Activated CD4-positive, alpha-beta memory T cell treated with anti-CD3 and anti-CD28 coated beads for 36 hours (primary cell): ENCODE measurements at regions of chr12 and their contacts with region 1.

Region 1: GRCh38 chr12:45234139-45234846 is 18.4 kb downstream of the ANO6 start:
- DNase-seq: peak; percentile 22
- H3K4me3 Mint-ChIP-seq: peak overlapping the region; percentile 16
- H3K27ac Mint-ChIP-seq: peak overlapping the region; percentile 79
- H3K4me1 Mint-ChIP-seq: peaks cover 62% of the 10 kb centered on the region
- H3K27me3 Mint-ChIP-seq: no peaks in the 10 kb centered on the region

Region 2: GRCh38 chr12:45192707-45193106 is 41.6 kb before region 1 on chr12:
- CTCF ChIA-PET with region 1: no interaction called
- POLR2A ChIA-PET with region 1: no interaction called
- intact Hi-C with region 1: loop called (anchors 2 kb)
- DNase-seq: no peak
- H3K4me3 Mint-ChIP-seq: no peak overlapping the region
- H3K27ac Mint-ChIP-seq: no peak overlapping the region
- H3K4me1 Mint-ChIP-seq: peaks cover 16% of the 10 kb centered on the region
- H3K27me3 Mint-ChIP-seq: no peaks in the 10 kb centered on the region

Region 3: DNA sequence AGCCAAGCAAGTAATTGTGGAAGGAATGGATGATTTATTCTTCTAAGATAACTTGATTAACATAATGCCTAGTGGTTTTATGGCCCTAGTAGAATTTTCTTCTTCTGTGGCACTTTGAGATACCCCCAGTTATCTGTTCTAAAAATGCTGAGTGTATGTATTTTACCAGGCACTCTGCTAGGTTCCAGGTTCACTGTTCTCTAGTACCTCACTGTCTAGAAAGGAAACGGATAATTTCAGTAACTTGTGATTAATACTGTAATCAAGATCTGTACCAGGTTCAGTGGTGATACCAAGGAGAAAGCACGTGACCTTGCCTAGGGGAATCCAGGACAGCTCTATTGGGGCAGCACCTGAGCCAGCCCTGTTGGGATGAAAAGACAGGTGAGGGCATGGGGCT is 10.4 kb before region 1 on chr12:
- CTCF ChIA-PET with region 1: interaction called, 3 read pairs
- POLR2A ChIA-PET with region 1: no interaction called
- intact Hi-C with region 1: loop called (anchors 1 kb)
- DNase-seq: no peak
- H3K4me3 Mint-ChIP-seq: no peak overlapping the region
- H3K27ac Mint-ChIP-seq: no peak overlapping the region
- H3K4me1 Mint-ChIP-seq: peaks cover 48% of the 10 kb centered on the region
- H3K27me3 Mint-ChIP-seq: no peaks in the 10 kb centered on the region

Region 4: GRCh38 chr12:45415393-45415817 is 181.1 kb after region 1 on chr12:
- CTCF ChIA-PET with region 1: no interaction called
- POLR2A ChIA-PET with region 1: no interaction called
- intact Hi-C with region 1: loop called (anchors 2 kb)
- DNase-seq: peak; percentile 60
- H3K4me3 Mint-ChIP-seq: no peak overlapping the region
- H3K27ac Mint-ChIP-seq: no peak overlapping the region
- H3K4me1 Mint-ChIP-seq: peaks cover 6% of the 10 kb centered on the region
- H3K27me3 Mint-ChIP-seq: no peaks in the 10 kb centered on the region

Region 5: DNA sequence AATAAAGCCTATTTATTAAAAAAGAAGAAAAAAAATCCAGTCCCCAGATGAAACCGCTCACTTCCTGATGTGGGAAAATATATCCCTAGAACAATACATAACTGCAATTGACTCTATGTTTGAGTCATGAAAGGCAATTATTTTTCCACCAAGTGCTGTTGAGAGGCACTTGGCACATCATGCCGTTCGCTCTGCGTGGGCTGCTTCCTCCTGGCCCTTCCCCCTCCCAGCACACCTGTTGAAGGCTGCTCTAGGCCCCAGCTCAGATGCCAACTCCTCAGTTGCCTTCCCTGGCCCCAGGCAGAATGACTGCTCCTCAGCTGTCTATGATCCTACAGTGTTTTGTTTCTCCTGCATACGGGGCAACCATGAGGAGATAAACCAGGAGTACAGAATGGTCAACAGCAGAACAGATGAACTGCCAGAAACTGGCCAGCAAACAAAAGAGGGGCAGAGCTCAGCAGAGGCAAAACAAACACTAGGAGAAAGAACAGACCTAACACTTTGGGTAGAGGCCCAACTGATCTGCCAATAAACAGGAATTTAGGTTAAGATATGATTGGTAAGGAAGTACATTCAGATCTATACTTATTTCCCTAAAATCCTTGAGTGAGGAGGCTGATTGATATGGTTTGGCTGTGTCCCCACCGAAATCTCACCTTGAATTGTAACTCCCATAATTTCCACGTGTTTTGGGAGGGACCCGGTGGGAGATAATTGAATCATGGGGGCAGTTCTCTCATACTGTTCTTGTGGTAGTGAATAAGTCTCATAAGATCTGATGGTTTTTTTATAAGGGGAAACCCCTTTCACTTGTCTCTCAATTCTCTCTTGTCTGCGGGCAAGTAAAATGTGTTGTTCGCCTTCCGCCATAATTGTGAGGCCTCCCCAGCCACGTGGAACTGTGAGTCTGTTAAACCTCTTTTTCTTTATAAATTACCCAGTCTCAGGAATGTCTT is 975.9 kb after region 1 on chr12:
- CTCF ChIA-PET with region 1: no interaction called
- POLR2A ChIA-PET with region 1: no interaction called
- intact Hi-C with region 1: loop called (anchors 10 kb)
- DNase-seq: peak; percentile 82
- H3K4me3 Mint-ChIP-seq: peak overlapping the region; percentile 40
- H3K27ac Mint-ChIP-seq: peak overlapping the region; percentile 98
- H3K4me1 Mint-ChIP-seq: peaks cover 74% of the 10 kb centered on the region
- H3K27me3 Mint-ChIP-seq: no peaks in the 10 kb centered on the region